WTC11 (cell line): ENCODE measurements at regions of chr10 and their contacts with region 1.

Region 1: DNA sequence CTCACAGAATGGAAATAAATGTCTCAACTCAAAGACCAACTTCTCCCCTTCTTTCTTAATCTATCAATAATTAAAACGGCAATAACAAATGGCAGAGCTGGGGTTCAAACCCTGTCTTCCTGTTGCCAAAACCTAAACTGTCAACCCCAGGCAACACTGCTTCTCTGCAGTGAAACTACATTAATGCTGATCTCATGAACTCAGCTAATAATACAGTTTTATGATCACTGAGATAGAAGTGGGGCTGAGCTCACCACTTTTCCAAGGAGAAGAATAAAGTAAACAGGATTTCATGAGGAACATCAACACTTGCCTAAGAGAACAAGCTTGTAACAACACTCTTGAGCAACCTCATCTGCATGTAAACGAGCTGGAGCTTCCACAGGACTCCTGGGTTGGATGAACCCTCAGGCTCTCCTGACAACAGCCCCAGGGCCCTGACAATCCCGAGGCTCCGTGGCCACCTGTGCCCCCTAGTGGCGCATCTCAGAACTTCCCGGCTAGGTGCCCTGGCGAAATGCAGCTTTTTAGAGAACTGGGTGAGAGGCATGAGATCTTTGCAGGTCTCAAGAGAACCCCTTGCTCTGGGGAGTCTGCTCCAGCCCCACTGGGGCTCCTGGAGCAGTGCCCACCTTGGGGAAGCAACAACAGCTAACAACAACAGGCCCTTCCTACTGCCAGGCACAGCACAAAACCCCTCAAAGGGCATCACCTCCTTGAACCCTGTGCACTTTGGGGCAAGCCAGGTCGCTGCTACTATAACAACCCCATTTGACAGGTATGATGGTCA is 169.3 kb downstream of the SH3PXD2A start:
- DNase-seq: peak; percentile 85
- ATAC-seq: peak; percentile 78
- H3K4me3 Mint-ChIP-seq: no peak overlapping the region
- H3K27ac Mint-ChIP-seq: 0 out of 2 replicates have a peak overlapping the region, but pooled peaks have one; percentile 3
- H3K4me1 Mint-ChIP-seq: peaks cover 18% of the 10 kb centered on the region
- H3K27me3 Mint-ChIP-seq: peaks cover 4% of the 10 kb centered on the region
- CTCF ChIP-seq: peak; percentile 95

Region 2: DNA sequence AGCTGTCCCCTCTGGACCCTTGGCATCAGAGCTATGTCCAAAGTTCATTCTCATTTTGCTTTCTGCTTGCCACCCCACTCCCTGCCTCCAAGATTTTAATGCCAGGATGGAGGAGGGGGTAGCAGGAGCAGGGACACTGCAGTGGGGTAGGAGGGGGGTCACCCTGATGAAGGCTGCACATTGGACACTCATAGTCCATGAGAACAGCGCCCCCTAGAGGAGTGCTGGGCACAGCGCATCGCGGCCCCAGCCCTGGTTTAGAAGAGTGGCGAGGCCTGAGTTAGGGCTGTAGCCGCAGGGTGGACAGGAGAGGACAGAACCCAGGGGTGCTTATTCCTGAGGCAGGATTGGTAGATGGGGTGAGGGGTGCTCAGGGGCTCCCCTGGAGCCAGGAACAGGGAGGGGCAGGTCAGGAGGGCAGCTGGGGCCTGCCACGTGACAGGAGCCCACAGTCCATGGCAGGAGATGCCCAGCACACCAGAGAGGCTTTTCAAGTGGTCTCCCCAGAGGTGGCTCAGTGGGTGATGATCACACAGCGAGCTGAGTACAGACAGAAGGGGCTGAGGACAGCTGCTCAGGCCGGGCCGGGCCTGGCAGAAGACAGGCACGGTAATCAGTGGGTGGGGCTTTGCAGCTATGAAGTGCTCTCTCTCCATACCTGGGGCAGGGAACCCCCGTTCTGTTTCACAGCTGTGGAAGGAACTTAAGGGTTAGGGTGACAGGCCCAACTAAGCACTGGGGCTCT is 121.1 kb before region 1 on chr10:
- CTCF ChIA-PET with region 1: interaction called, 12 read pairs
- POLR2A ChIA-PET with region 1: no interaction called
- DNase-seq: peak; percentile 87
- ATAC-seq: peak; percentile 93
- H3K4me3 Mint-ChIP-seq: no peak overlapping the region
- H3K27ac Mint-ChIP-seq: no peak overlapping the region
- H3K4me1 Mint-ChIP-seq: no peaks in the 10 kb centered on the region
- H3K27me3 Mint-ChIP-seq: no peaks in the 10 kb centered on the region; the same call in 1 of the 2 replicates
- CTCF ChIP-seq: peak; percentile 99

Region 3: DNA sequence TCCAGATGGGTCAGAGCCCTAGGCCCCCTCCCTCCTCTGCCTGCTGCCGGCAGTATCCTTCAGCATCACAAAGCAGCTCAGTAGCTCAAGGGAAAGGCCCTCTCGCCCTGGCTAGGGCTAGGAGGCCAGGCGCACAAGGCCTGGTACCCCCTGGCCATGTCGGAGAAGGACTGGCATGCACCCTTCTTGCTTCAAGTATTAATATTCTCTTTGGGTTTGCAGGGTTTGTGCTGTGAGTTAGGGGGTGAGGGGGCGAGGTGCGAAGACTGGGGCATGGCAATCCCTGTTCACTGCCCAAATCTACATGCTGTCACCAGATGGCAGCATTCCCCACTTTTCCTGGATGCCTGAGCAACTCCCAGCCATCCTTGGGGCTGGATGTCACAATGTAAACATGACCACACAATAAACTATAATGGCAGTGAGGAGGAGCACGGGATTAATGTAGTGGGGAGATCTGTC is 87.4 kb before region 1 on chr10:
- CTCF ChIA-PET with region 1: interaction called, 105 read pairs
- POLR2A ChIA-PET with region 1: no interaction called
- DNase-seq: peak; percentile 66
- ATAC-seq: peak; percentile 90
- H3K4me3 Mint-ChIP-seq: no peak overlapping the region
- H3K27ac Mint-ChIP-seq: no peak overlapping the region
- H3K4me1 Mint-ChIP-seq: peaks cover 11% of the 10 kb centered on the region
- H3K27me3 Mint-ChIP-seq: peaks cover 4% of the 10 kb centered on the region; the same call in 1 of the 2 replicates
- CTCF ChIP-seq: no peak; the same call in 1 of the 2 replicates

Region 4: DNA sequence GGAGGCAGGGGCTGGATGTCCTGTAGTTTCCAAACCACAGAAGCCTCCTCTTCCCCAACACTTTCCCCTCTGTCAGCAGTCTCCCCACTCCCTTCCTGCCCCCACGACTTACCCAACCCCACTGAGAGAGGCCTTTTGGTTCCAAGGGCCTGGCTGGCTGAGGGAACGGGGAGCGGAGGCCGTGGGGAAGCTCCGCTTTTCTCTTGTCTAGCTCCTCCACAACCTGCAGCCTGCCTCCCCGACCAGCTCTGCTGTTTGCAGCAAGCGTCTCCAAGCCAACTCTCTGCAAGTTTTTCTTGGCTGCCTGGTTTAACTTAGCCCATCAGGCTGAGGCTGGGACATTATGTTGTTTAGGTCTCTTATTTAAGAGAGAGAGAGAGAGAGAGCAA is 65.7 kb before region 1 on chr10:
- CTCF ChIA-PET with region 1: interaction called, 20 read pairs
- POLR2A ChIA-PET with region 1: no interaction called
- DNase-seq: no peak
- ATAC-seq: no peak
- H3K4me3 Mint-ChIP-seq: no peak overlapping the region
- H3K27ac Mint-ChIP-seq: peak overlapping the region; percentile 55
- H3K4me1 Mint-ChIP-seq: peaks cover 2% of the 10 kb centered on the region
- H3K27me3 Mint-ChIP-seq: no peaks in the 10 kb centered on the region
- CTCF ChIP-seq: no peak

Region 5: GRCh38 chr10:103659674-103660363 is 26.3 kb before region 1 on chr10:
- CTCF ChIA-PET with region 1: interaction called, 50 read pairs
- POLR2A ChIA-PET with region 1: interaction called, 4 read pairs
- DNase-seq: peak; percentile 23
- ATAC-seq: peak; percentile 47
- H3K4me3 Mint-ChIP-seq: no peak overlapping the region; the same call in 1 of the 2 replicates
- H3K27ac Mint-ChIP-seq: no peak overlapping the region; the same call in 1 of the 2 replicates
- H3K4me1 Mint-ChIP-seq: peaks cover 16% of the 10 kb centered on the region
- H3K27me3 Mint-ChIP-seq: no peaks in the 10 kb centered on the region
- CTCF ChIP-seq: no peak

Region 6: DNA sequence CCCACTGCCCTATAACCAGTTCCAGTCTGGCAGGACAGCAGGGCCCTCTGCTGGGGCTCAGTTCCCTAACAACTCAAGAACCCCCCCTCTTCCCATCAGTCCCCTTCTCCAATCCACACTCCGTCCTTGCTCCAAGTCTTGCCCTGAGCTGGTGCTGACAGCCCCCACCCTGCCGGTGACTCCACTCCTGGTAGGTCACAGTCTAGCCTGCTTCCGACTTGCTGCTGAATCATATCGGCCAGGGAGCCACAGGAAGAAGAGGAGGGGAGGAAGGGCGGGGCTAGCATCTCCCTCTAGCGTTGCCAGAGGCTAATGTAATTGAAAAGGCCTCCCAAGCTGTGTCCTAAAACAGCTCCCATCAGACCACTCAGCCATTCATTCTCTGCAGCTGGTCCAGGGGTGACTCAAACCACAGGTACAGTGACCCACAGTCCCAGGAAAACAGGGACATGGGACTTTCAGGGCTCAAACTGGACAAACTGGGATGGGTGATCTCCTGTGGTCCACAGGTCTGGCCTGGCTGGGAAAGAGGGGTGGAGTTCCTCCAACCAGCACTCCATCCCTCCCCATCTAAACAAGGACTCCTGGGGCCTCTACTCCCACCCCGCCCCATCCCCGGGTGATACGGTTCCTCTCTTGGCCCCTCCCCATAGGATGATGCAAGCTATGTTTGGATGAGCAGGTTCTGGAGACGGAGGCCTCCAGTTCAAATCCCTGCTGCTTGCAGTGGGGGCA is 10.5 kb after region 1 on chr10:
- CTCF ChIA-PET with region 1: interaction called, 20 read pairs
- POLR2A ChIA-PET with region 1: no interaction called
- DNase-seq: peak; percentile 55
- ATAC-seq: peak; percentile 53
- H3K4me3 Mint-ChIP-seq: no peak overlapping the region
- H3K27ac Mint-ChIP-seq: no peak overlapping the region; the same call in 1 of the 2 replicates
- H3K4me1 Mint-ChIP-seq: peaks cover 28% of the 10 kb centered on the region
- H3K27me3 Mint-ChIP-seq: peaks cover 32% of the 10 kb centered on the region
- CTCF ChIP-seq: no peak